CD8-positive, alpha-beta T cell (primary cell): ENCODE measurements at regions of chr2 and their contacts with region 1.

Region 1: GRCh38 chr2:64018923-64019718 is at the start of gene VPS54:
- DNase-seq: peak; percentile 22 to 80 (median 57)
- ATAC-seq: peak; percentile 65
- H3K4me3 ChIP-seq: peak within 1 kb of the TSS; percentile 79 to 89
- H3K4me3 Mint-ChIP-seq: peak within 1 kb of the TSS; percentile 96
- H3K27ac ChIP-seq: peak within 1 kb of the TSS; percentile 57 to 77
- H3K27ac Mint-ChIP-seq: peak within 1 kb of the TSS; percentile 97
- H3K4me1 ChIP-seq: peaks cover 31% of the 10 kb centered on the region
- H3K4me1 Mint-ChIP-seq: peaks cover 46% of the 10 kb centered on the region
- H3K27me3 ChIP-seq: no peaks in the 10 kb centered on the region
- H3K27me3 Mint-ChIP-seq: no peaks in the 10 kb centered on the region
- CTCF ChIP-seq: no peak
- total RNA-seq, gene VPS54: 7.0 to 8.5 TPM

Region 2: GRCh38 chr2:63834401-63834800 is 184.7 kb before region 1 on chr2:
- CTCF ChIA-PET with region 1: no interaction called
- POLR2A ChIA-PET with region 1: no interaction called
- intact Hi-C with region 1: loop called in 1 of 2 experiments (anchors 5 kb)
- DNase-seq: no peak
- ATAC-seq: no peak
- H3K4me3 ChIP-seq: no peak overlapping the region
- H3K4me3 Mint-ChIP-seq: no peak overlapping the region
- H3K27ac ChIP-seq: no peak overlapping the region
- H3K27ac Mint-ChIP-seq: no peak overlapping the region
- H3K4me1 ChIP-seq: no peaks in the 10 kb centered on the region
- H3K4me1 Mint-ChIP-seq: no peaks in the 10 kb centered on the region
- H3K27me3 ChIP-seq: no peaks in the 10 kb centered on the region
- H3K27me3 Mint-ChIP-seq: peaks cover 2% of the 10 kb centered on the region
- CTCF ChIP-seq: no peak

Region 3: DNA sequence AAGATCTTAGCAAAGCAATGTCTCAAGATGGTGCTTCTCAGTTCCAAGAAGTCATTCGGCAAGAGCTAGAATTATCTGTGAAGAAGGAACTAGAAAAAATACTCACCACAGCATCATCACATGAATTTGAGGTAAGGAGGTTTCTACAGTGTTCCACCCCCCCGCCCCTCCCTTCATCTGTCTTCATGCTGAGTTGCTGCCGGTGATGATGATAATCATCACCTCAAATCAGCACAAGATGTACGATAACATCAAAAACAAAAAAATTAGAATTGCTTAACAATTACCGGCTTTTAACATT is 162.9 kb before region 1 on chr2:
- CTCF ChIA-PET with region 1: no interaction called
- POLR2A ChIA-PET with region 1: no interaction called
- intact Hi-C with region 1: no loop called
- DNase-seq: peak in 7 of 9 experiments; percentile 32 to 89 (median 43)
- ATAC-seq: peak; percentile 88
- H3K4me3 ChIP-seq: peak overlapping the region in 1 of 2 experiments; percentile 1
- H3K4me3 Mint-ChIP-seq: peak overlapping the region; percentile 76
- H3K27ac ChIP-seq: peak overlapping the region; percentile 57 to 69
- H3K27ac Mint-ChIP-seq: peak overlapping the region; percentile 97
- H3K4me1 ChIP-seq: peaks cover 48% of the 10 kb centered on the region
- H3K4me1 Mint-ChIP-seq: peaks cover 64% of the 10 kb centered on the region
- H3K27me3 ChIP-seq: no peaks in the 10 kb centered on the region
- H3K27me3 Mint-ChIP-seq: no peaks in the 10 kb centered on the region
- CTCF ChIP-seq: no peak

Region 4: DNA sequence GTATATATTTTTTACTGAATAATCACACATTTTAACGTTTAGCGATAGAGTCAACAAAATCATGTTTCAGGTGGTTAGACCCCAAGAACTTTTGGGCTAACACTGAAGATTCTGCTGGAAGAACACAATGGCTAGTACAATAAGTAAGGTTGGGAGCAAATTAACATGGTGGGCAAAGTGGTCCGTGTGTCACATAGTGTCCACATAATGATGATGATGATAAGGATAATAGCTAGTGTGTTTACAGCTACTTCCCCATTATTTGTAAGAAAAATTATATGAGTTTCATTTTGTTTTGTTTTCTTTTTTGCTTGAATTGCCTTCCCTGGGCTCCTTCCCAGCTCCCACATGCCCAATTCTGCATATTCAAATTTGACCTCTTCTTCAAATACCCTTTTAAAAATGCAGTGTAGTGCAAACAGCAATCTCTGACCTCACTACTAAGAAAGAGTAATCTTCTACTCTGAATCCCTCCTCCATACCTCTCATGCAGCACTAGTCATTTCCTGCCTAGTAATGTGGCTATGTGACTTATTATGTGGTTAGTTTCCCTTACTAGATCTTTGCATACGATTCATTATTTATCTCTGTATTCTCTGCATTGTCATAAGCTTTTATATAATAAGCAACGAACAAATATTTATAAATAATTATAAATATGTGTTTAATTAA is 17.0 kb after region 1 on chr2:
- CTCF ChIA-PET with region 1: interaction called, 3 read pairs
- POLR2A ChIA-PET with region 1: interaction called, 4 read pairs
- intact Hi-C with region 1: loop called (anchors 1 to 2 kb)
- DNase-seq: peak in 4 of 9 experiments; percentile 9 to 77 (median 44)
- ATAC-seq: peak; percentile 96
- H3K4me3 ChIP-seq: peak overlapping the region in 1 of 2 experiments; percentile 3
- H3K4me3 Mint-ChIP-seq: peak overlapping the region; percentile 44
- H3K27ac ChIP-seq: peak overlapping the region in 1 of 2 experiments; percentile 29
- H3K27ac Mint-ChIP-seq: peak overlapping the region; percentile 78
- H3K4me1 ChIP-seq: peaks cover 26% of the 10 kb centered on the region
- H3K4me1 Mint-ChIP-seq: peaks cover 46% of the 10 kb centered on the region
- H3K27me3 ChIP-seq: no peaks in the 10 kb centered on the region
- H3K27me3 Mint-ChIP-seq: no peaks in the 10 kb centered on the region
- CTCF ChIP-seq: no peak

Region 5: DNA sequence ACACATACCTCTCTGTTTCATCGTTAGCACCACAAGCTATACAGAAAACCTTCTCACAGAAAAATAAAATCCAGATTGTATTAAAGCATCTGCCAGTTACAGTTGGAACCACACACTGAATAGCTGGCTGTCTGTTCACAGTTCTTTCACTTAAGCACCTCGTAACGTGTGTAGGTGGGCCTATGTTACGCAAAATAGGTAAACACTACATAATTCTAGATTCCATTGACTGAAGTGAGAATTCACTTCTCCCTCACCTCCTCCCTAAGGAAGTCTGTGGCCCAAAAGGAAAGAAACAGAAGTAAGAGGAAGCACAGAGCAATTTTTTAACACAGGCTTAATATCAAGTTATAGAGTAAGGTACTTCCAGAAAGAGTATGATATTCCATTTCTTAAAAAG is 100.2 kb after region 1 on chr2:
- CTCF ChIA-PET with region 1: no interaction called
- POLR2A ChIA-PET with region 1: no interaction called
- intact Hi-C with region 1: no loop called
- DNase-seq: no peak
- ATAC-seq: no peak
- H3K4me3 ChIP-seq: no peak overlapping the region
- H3K4me3 Mint-ChIP-seq: no peak overlapping the region
- H3K27ac ChIP-seq: no peak overlapping the region
- H3K27ac Mint-ChIP-seq: no peak overlapping the region
- H3K4me1 ChIP-seq: peaks cover 22% of the 10 kb centered on the region
- H3K4me1 Mint-ChIP-seq: peaks cover 62% of the 10 kb centered on the region
- H3K27me3 ChIP-seq: no peaks in the 10 kb centered on the region
- H3K27me3 Mint-ChIP-seq: no peaks in the 10 kb centered on the region
- CTCF ChIP-seq: no peak